KBM-7 (cell line): ENCODE measurements at regions of chr2 and their contacts with region 1.

Region 1: DNA sequence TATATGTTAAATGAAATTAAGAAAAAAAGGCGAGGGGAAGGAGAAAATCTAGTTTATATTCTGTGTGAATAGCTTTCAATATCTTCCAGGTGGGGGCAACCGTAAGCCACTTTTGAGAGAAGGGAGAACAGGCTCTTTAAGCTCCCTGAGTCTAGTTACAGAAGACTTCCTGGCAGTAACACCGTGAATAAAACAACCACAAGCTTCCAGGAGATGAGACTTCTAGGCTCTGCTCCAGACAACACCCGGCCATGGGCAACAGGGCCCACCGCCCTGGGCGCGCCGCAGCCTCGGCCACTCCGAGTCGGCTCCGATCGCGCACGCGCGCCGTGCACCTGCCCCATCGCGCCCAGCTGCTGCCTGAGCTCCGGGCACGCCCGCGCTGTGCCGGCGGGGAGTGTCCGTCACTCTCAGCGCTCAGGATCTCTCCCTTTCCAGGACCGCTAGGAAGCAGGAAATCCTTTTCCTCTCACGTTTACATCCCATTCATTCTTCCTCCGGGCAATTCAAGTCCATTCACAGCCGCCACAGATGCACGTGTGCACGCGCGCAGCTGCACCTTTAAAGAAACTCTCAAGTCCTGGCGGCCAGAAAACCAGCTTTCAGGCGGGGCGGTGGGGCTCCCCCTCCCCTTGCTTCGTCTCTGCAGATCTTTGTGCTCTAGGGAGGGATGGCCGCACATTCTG is 19.4 kb upstream of the PAX3 start:
- DNase-seq: peak; percentile 77

Region 2: DNA sequence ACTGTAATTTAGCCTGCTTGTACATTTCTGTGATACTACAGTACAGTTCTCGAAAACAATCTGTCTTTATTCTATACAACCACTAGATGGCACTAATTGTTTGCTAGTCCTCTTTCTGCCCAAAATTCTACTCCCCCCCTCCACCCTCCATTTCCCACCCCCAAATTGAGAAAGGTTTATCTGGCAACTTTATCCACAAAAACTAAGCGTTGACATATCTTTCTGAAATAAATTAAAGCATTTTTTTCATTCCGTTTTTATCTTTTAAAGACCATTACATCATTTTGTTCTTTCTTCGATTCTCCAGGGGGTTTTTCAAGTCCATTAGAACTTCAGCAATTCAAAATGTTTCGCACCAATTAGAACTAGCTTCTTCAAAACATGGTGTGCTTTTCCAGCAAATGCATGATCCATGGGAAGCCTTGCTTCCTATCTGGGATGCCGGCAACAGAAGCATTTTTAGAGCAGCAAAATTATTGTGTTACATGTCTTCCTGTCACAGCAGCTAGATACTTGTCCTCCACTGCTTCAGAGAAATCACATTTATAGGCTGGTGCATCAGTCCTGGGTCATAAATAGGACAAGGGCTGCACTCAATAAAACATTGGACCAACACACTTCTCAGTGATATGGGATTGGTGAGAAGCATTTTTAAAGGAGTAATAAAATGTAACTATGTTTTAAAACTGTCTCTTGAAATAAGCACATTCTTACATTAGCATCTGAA is 260.7 kb before region 1 on chr2:
- in situ Hi-C with region 1: loop called (anchors 25 kb)
- DNase-seq: peak; percentile 24

Region 3: GRCh38 chr2:222561817-222562645 is 243.9 kb after region 1 on chr2:
- in situ Hi-C with region 1: loop called (anchors 25 kb)
- DNase-seq: peak; percentile 77